ENCODE measurements at regions of chr22 and their contacts with region 1.

Region 1: DNA sequence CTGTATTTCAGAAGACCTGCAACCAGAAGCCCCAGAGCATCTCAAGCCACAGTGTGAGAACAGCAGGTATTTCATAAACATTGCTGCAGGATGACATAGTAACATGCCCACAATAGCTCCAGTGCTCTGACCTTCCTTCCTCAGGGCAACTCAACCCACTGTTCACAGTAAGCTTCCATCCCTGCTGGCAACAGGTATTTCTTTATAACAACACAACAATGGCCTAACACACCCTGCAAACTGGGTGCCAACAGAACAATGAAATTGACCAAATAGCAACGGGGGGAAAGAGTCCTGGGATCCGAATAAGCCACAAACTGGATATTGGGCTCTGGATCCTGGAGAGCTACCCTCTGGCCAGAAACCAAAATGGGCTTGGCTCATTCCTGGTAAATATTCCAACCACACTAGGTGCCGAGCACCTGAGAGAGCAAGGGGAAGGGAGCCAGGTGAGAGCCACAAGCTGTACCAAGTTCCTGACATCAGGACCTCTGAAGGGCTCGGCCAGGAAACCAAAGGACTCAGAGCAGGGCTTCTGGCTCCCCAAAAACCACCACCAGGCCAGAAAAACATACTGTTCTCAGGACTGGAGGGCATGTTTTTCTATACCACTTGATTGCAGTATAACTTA is 99.5 kb downstream of the MICAL3 start:
- DNase-seq: no peak
- ATAC-seq: no peak
- H3K4me3 ChIP-seq: no peak overlapping the region
- H3K27ac ChIP-seq: no peak overlapping the region
- H3K4me1 ChIP-seq: peaks cover 23 to 46% of the 10 kb centered on the region in 2 experiments
- H3K27me3 ChIP-seq: no peaks in the 10 kb centered on the region
- CTCF ChIP-seq: no peak
- POLR2A ChIP-seq: no peak
- RAD21 ChIP-seq: no peak

Region 2: DNA sequence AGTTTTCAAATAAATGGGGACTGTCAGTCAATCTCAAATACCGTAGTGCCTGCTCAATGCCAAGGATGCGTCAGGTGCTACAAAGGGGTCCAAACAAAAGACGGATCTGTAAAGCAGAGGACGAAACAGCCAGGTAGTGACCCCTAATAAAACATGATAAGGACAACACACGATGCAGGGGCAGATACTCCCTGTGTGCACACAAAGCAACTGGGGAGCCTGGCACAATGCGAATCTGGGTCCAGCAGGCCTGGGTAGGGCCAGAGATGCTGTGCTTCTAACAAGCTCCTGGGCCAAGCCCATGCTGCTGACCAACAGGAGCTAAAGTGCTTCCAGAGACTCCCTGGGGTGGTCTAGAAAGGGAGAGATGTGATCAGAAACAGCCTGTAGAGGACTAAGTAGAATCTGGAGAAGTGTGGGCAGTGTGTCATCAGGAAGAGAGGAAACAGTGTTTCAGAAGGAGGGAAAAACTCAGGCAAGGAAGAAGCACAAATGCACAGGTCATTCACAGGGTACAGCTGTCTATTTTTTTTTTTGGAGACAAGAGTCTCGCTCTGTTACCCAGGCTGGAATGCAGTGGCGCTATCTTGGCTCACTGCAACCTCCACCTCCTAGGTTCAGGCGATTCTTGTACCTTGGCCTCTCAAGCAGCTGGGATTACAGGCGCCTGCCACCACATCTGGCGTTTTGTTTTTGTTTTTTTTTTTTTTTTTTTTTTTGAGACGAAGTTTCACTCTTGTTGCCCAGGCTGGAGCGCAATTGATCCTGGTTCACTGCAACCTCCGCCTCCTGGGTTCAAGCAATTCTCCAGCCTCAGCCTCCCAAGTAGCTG is 25.0 kb after region 1 on chr22:
- CTCF ChIA-PET with region 1: no interaction called
- POLR2A ChIA-PET with region 1: no interaction called
- RAD21 ChIA-PET with region 1: no interaction called
- intact Hi-C with region 1: loop called (anchors 1 kb)
- DNase-seq: no peak
- ATAC-seq: no peak
- H3K4me3 ChIP-seq: no peak overlapping the region
- H3K27ac ChIP-seq: no peak overlapping the region
- H3K4me1 ChIP-seq: peaks cover 0 to 11% of the 10 kb centered on the region in 2 experiments; a peak in 1 of 4 replicates
- H3K27me3 ChIP-seq: no peaks in the 10 kb centered on the region
- CTCF ChIP-seq: no peak
- POLR2A ChIP-seq: no peak
- RAD21 ChIP-seq: no peak

Measured in HCT116 (cell line).